Activated naive CD4-positive, alpha-beta T cell treated with anti-CD3 and anti-CD28 coated beads for 36 hours (primary cell): ENCODE measurements at regions of chr2 and their contacts with region 1.

Region 1: DNA sequence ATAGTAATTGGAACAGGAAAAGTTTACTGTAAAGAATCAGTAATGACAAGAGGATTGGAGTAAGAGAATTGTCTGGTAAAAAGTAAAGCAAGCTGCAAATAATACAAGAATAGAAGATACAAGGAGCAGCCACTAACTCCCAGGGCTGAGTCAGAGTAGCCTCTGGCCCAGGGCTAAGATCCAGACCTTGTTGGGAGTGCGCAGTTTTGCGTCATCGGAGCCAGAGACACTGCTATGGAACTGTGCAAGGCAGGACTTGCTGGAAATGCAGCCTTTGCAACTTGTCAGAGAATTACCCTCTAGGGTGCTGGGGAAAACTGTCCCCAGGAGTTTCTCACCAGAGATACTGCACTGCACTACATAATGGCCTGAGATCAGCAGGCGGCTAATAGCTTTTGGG is 135.2 kb downstream of the NYAP2 start:
- DNase-seq: no peak
- H3K4me3 Mint-ChIP-seq: no peak overlapping the region
- H3K27ac Mint-ChIP-seq: no peak overlapping the region
- H3K4me1 Mint-ChIP-seq: no peaks in the 10 kb centered on the region
- H3K27me3 Mint-ChIP-seq: peaks cover 10% of the 10 kb centered on the region

Region 2: GRCh38 chr2:224252631-224253030 is 1282.1 kb before region 1 on chr2:
- CTCF ChIA-PET with region 1: no interaction called
- intact Hi-C with region 1: loop called (anchors 5 kb)
- DNase-seq: no peak
- H3K4me3 Mint-ChIP-seq: no peak overlapping the region
- H3K27ac Mint-ChIP-seq: no peak overlapping the region
- H3K4me1 Mint-ChIP-seq: peaks cover 3% of the 10 kb centered on the region
- H3K27me3 Mint-ChIP-seq: peaks cover 7% of the 10 kb centered on the region

Region 3: GRCh38 chr2:224807153-224807964 is 727.3 kb before region 1 on chr2:
- CTCF ChIA-PET with region 1: no interaction called
- intact Hi-C with region 1: no loop called
- DNase-seq: no peak
- H3K4me3 Mint-ChIP-seq: no peak overlapping the region
- H3K27ac Mint-ChIP-seq: peak overlapping the region; percentile 80
- H3K4me1 Mint-ChIP-seq: no peaks in the 10 kb centered on the region
- H3K27me3 Mint-ChIP-seq: no peaks in the 10 kb centered on the region

Region 4: GRCh38 chr2:224894356-224894755 is 640.3 kb before region 1 on chr2:
- CTCF ChIA-PET with region 1: no interaction called
- intact Hi-C with region 1: no loop called
- DNase-seq: no peak
- H3K4me3 Mint-ChIP-seq: peak overlapping the region; percentile 50
- H3K27ac Mint-ChIP-seq: peak overlapping the region; percentile 90
- H3K4me1 Mint-ChIP-seq: peaks cover 69% of the 10 kb centered on the region
- H3K27me3 Mint-ChIP-seq: no peaks in the 10 kb centered on the region